ENCODE measurements at regions of chr13 and their contacts with region 1.

Region 1: GRCh38 chr13:39527961-39528660 is 74.9 kb downstream of the LHFPL6 start:
- DNase-seq: no peak
- ATAC-seq: peak in 3 of 8 donors; percentile 14 to 79 (median 43)
- H3K4me3 ChIP-seq: no peak overlapping the region
- H3K27ac ChIP-seq: peak overlapping the region in 6 of 10 donors; percentile 5 to 63 (median 28)
- H3K4me1 ChIP-seq: peaks cover 10 to 91% (median 76%) of the 10 kb centered on the region in 9 donors
- H3K27me3 ChIP-seq: no peaks in the 10 kb centered on the region
- CTCF ChIP-seq: no peak

Region 2: GRCh38 chr13:39565036-39565949 is 37.2 kb after region 1 on chr13:
- intact Hi-C with region 1: loop called in 1 of 10 experiments (anchors 5 kb)
- DNase-seq: no peak
- ATAC-seq: peak in 5 of 8 donors; percentile 66 to 81 (median 69)
- H3K4me3 ChIP-seq: no peak overlapping the region
- H3K27ac ChIP-seq: peak overlapping the region in 8 of 10 donors; percentile 3 to 74 (median 42)
- H3K4me1 ChIP-seq: peaks cover 12 to 74% (median 47%) of the 10 kb centered on the region in 9 donors
- H3K27me3 ChIP-seq: no peaks in the 10 kb centered on the region
- CTCF ChIP-seq: no peak

Region 3: DNA sequence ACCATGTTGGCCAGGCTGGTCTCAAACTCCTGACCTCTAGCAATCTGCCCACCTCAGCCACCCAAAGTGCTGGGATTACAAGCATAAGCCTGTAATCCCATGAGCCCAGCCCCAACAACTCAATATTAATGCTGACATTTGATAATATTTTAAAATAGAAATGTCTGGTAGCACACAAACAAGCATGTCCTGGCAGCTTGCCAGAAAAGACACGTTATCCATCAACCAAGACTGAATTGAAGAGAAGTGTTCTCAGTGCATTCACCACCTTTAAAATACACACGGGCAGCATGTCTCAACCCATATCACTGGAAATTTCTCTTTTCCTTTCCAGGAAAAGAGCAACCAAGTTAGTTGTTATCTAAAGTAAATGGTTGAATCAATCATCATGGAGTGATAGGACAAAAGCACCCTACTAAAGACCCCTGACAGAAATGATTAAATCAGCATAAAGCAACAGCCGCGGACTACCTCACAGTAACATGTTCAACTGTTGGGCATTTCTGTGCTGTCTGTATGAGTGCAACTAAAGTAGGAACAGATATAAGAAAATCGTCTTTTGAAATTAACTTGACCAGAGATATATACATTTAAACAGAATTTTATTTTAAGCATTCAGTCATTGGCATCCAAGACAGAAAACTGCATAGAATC is 49.9 kb after region 1 on chr13:
- intact Hi-C with region 1: loop called in 1 of 10 experiments (anchors 5 kb)
- DNase-seq: peak in 1 of 2 donors; percentile 67
- ATAC-seq: peak in 6 of 8 donors; percentile 43 to 69 (median 52)
- H3K4me3 ChIP-seq: no peak overlapping the region
- H3K27ac ChIP-seq: peak overlapping the region in 8 of 10 donors; percentile 11 to 71 (median 38)
- H3K4me1 ChIP-seq: peaks cover 3 to 87% (median 55%) of the 10 kb centered on the region in 9 donors
- H3K27me3 ChIP-seq: no peaks in the 10 kb centered on the region
- CTCF ChIP-seq: no peak

Measured in heart right ventricle (tissue), 16 donors.